ENCODE measurements at regions of chr10 and their contacts with region 1.

Region 1: DNA sequence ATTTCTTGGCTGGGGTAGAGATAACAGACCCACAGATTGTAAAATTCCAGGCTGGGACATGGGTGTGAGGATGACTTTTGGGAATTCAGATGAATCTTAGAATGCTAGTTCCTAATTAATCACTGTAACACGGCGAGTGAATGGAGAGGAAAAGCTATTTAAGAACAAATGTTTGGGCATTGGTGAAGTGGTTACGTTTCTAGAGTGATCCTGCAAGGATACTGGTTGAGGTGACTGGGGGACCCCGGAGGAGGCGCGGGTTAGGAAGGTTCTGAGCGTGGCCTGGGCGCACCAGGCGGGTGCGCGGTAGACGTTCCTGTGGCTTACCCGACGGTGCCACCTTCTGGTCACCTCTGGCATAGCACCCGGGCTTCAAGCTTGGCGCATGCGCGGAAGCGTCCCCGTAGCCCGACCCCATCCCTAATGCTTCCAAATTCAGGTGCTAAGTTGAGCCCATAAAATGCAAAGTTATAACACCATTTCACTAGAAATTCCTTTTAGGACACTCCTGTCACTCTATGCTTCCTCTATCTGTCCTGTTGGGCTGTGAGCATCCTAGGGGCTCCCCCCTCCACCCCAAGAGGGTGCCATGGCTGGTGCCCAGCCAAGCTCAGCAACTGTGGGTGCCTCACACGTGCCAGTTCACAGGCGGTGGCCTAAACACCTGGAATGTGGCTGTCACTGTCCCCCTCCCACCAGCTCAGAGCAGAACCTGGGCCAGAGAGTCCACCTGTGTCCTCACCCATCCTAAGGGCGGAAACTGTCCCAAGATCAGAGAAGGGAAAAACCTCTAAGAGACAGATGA is 104.5 kb downstream of the PTPRE start:
- DNase-seq: peak; percentile 68 to 88
- ATAC-seq: peak; percentile 79 to 94
- H3K4me3 ChIP-seq: no peak overlapping the region
- H3K27ac ChIP-seq: no peak overlapping the region
- H3K4me1 ChIP-seq: no peaks in the 10 kb centered on the region; the same call in 2 of the 3 replicates
- CTCF ChIP-seq: peak; percentile 89
- EP300 ChIP-seq: no peak
- POLR2A ChIP-seq: no peak
- RAD21 ChIP-seq: peak; percentile 91 to 95

Region 2: GRCh38 chr10:127906548-127907377 is 104.6 kb before region 1 on chr10 and contains the start of gene PTPRE:
- CTCF ChIA-PET with region 1: interaction called, 229 read pairs
- POLR2A ChIA-PET with region 1: no interaction called
- DNase-seq: peak; percentile 44 to 77
- ATAC-seq: peak; percentile 97 to 98
- H3K4me3 ChIP-seq: peak within 1 kb of the TSS; percentile 73
- H3K27ac ChIP-seq: peak within 1 kb of the TSS; percentile 67 to 86
- H3K4me1 ChIP-seq: peaks cover 13% of the 10 kb centered on the region; the same call in 1 of the 3 replicates
- CTCF ChIP-seq: peak; percentile 88
- EP300 ChIP-seq: no peak
- POLR2A ChIP-seq: no peak
- RAD21 ChIP-seq: peak; percentile 69 to 94
- polyA plus RNA-seq, gene PTPRE: 0.22 and 0.31 TPM in 2 replicates

Region 3: DNA sequence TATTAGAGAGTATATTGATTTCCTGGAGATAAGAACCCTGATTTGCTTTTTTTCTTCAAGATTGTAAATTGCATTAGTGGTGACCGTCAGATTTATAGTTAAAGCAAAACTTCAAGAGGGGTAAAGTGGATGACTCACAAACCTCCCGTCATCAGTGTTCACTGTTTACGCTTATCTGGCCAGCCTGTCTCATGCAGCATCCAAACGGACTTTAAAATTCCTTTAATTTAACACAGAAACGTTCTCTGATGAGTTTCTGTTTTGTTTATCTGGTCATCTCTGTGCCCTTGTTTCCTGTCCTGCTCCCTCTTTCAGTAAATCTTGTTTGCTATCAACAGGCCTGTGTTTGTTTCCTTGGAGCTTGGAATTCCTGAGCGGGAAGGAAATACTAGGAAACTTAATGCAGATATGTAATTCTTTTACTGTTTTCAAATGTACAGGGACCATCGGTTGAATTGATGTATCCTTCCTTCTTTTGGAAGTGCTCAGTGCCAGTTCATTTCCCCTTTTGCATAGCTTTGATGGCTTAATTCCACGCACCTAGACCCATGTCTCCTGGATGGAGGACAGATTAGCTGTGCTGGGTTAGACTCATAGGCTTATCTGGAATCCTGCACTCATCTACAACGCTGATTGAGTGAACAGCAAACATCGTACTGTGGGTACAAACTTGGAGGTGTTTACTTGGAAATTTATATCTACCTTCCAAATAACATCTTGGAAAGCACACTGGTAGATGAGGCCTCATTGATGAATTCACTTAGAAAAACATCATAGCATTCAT is 83.2 kb before region 1 on chr10:
- CTCF ChIA-PET with region 1: interaction called, 13 read pairs
- POLR2A ChIA-PET with region 1: no interaction called
- DNase-seq: no peak
- ATAC-seq: peak; percentile 70 to 71; a peak in 4 of 6 replicates
- H3K4me3 ChIP-seq: no peak overlapping the region
- H3K27ac ChIP-seq: peak overlapping the region in 1 of 2 experiments; percentile 33; a peak in 2 of 6 replicates
- H3K4me1 ChIP-seq: peaks cover 14% of the 10 kb centered on the region; the same call in 1 of the 3 replicates
- CTCF ChIP-seq: no peak
- EP300 ChIP-seq: no peak
- POLR2A ChIP-seq: no peak
- RAD21 ChIP-seq: no peak

Region 4: DNA sequence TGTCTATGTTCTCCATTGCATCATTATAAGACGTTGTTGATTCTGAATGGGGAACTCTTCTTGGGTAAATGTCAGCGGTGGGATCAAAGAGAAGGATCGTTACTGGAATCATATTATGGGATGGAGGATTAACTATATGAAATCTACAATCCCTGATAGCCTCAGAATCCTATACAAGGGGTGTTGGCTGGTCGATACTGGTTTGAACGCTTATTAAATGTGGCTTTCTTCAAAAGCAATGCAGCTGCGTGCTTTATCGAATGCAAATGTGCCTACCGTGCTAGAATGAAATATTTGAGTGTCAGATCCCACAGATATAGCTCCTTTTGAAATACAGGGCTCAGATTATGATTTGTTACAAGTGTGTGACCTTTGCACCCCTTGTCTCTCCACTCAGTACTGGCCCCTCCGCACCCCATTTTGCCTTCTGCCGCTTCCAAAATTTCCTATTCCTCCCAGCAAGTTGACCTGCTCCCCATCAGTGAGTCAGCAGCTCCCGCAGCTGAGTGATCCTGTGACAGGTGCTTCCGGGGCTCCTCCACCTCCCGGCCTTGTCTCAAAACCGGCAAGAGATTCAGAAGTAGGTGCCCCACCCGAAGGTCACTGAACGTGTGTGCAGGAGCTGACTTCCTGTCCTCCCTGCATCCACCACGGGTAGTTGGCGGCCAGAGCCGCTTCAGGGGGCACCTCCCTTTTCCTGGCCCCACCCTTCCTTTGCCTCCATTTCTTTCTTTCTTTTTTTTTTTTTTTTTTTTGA is 27.9 kb before region 1 on chr10:
- CTCF ChIA-PET with region 1: interaction called, 10 read pairs
- POLR2A ChIA-PET with region 1: no interaction called
- DNase-seq: no peak
- ATAC-seq: no peak
- H3K4me3 ChIP-seq: no peak overlapping the region
- H3K27ac ChIP-seq: no peak overlapping the region
- H3K4me1 ChIP-seq: no peaks in the 10 kb centered on the region
- CTCF ChIP-seq: no peak
- EP300 ChIP-seq: no peak
- POLR2A ChIP-seq: no peak
- RAD21 ChIP-seq: no peak

Region 5: DNA sequence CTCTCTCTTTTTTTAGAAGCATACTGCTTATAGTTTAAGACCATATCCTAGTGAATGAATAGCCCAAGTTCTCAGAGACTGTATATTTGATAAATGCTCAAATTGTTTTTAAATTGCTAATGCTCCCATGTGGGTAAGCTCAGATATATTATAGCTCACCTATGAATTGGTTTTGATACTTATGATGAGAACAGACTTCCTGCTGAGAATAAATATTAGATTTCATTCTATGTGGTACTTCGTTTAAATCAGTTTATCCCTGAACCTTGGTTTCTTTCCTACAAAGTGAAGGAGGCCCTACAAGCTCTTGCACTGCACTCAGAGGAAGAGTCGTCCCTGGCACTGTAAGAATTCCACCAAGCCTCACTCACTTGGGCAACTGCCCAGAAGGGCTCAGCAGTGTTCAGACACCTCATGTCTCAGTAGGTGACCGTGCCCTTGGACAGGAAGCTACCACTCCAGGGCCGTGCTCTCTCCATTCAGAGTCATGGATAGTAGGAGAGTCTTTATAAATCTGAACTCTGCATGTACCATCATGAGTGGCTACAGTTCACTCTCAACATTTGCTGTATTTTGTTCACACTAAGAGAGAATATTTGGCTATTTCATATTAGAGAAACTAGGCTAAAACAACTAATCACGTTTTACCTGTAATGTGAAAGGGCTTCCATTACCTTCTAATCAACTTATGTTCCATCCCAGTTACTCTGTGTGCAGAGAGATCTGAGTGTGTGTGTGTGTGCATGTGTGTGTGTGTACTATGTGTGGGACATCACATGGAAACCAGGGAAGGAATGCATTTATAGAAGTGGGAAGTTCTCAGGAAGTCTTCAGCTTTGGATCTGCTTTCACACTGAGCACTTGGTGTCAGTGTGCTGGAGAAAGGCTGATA is 10.7 kb before region 1 on chr10:
- CTCF ChIA-PET with region 1: interaction called, 25 read pairs
- POLR2A ChIA-PET with region 1: no interaction called
- DNase-seq: no peak
- ATAC-seq: peak; percentile 27 to 57; a peak in 3 of 6 replicates
- H3K4me3 ChIP-seq: no peak overlapping the region
- H3K27ac ChIP-seq: no peak overlapping the region
- H3K4me1 ChIP-seq: no peaks in the 10 kb centered on the region
- CTCF ChIP-seq: no peak
- EP300 ChIP-seq: no peak
- POLR2A ChIP-seq: no peak
- RAD21 ChIP-seq: no peak

Region 6: DNA sequence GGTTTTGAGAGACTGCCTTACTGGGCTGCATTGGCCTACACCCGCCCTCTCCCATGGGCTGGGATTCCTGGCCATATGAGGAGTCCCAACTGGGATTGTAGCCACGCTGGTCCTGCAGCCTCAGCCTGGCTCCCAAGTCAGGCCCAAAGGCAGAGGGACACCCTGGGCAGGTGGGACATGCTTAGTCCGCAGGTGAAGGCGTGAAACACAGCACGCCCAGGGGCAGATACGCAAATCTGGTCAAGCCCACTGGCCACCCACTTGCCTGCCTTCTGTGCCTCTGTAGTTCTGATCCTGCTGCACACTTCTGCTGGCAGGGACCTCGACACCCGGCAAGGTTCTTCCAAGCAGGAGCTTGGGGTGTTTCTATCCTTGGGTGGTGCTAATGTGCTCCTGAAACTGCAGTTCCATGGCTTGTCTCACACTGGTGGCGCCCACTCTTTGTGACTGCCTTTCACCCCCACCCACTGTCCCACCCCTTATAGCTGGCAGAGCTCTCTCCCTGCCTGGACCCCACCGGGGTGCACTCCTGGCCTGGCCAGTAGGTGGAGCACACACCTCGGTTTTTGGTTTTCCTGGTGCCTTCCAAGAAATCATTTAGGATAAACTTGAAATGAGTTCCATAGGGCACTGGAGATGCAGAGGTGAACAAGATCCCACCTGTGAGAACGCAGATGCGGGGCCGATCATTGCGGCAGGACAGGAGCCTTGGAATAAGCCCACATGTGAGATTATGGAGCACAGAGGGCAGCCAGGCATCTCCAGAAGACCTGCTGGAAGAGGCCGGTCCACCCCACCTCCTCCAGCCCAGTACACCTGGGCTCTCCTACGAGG is 67.0 kb after region 1 on chr10:
- CTCF ChIA-PET with region 1: interaction called, 12 read pairs
- POLR2A ChIA-PET with region 1: no interaction called
- DNase-seq: peak; percentile 46 to 76
- ATAC-seq: peak; percentile 89 to 97
- H3K4me3 ChIP-seq: no peak overlapping the region
- H3K27ac ChIP-seq: no peak overlapping the region
- H3K4me1 ChIP-seq: no peaks in the 10 kb centered on the region
- CTCF ChIP-seq: peak; percentile 71
- EP300 ChIP-seq: no peak
- POLR2A ChIP-seq: no peak
- RAD21 ChIP-seq: peak; percentile 79 to 81

Measured in A549 (cell line).